ENCODE measurements at regions of chr2 and their contacts with region 1.

Region 1: DNA sequence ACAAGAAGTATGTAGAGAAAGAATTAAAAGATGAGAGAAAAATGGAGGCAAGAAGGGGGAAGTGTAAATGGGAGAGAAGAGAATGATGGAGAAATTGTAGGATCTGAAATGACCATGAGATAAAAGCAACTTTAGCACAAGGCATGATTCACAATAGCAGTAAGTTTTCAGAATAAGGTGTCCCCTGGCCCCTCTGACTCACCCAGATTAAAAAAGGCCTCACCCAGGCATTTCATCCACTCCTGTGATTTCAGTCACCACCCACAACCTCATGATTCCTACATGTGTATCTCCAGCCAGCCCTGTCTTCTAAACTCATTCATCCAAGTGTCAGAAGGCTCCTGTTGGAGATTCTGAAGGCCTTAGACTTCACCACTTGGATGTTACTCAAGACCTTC is 56.6 kb downstream of the SP100 start:
- DNase-seq: no peak
- ATAC-seq: peak; percentile 75
- H3K4me3 Mint-ChIP-seq: peak overlapping the region; percentile 17
- H3K27ac Mint-ChIP-seq: peak overlapping the region; percentile 89
- H3K4me1 Mint-ChIP-seq: peaks cover 56% of the 10 kb centered on the region
- H3K27me3 Mint-ChIP-seq: no peaks in the 10 kb centered on the region
- CTCF ChIP-seq: no peak

Region 2: GRCh38 chr2:229519655-229520430 is 952.8 kb before region 1 on chr2:
- CTCF ChIA-PET with region 1: no interaction called
- POLR2A ChIA-PET with region 1: no interaction called
- intact Hi-C with region 1: no loop called
- DNase-seq: no peak
- ATAC-seq: no peak
- H3K4me3 Mint-ChIP-seq: no peak overlapping the region
- H3K27ac Mint-ChIP-seq: no peak overlapping the region
- H3K4me1 Mint-ChIP-seq: no peaks in the 10 kb centered on the region
- H3K27me3 Mint-ChIP-seq: no peaks in the 10 kb centered on the region
- CTCF ChIP-seq: no peak

Region 3: GRCh38 chr2:230268606-230269243 is 203.9 kb before region 1 on chr2:
- CTCF ChIA-PET with region 1: no interaction called
- POLR2A ChIA-PET with region 1: no interaction called
- intact Hi-C with region 1: loop called (anchors 5 kb)
- DNase-seq: no peak
- ATAC-seq: no peak
- H3K4me3 Mint-ChIP-seq: peak overlapping the region; percentile 60
- H3K27ac Mint-ChIP-seq: peak overlapping the region; percentile 92
- H3K4me1 Mint-ChIP-seq: peaks cover 81% of the 10 kb centered on the region
- H3K27me3 Mint-ChIP-seq: no peaks in the 10 kb centered on the region
- CTCF ChIP-seq: no peak

Region 4: DNA sequence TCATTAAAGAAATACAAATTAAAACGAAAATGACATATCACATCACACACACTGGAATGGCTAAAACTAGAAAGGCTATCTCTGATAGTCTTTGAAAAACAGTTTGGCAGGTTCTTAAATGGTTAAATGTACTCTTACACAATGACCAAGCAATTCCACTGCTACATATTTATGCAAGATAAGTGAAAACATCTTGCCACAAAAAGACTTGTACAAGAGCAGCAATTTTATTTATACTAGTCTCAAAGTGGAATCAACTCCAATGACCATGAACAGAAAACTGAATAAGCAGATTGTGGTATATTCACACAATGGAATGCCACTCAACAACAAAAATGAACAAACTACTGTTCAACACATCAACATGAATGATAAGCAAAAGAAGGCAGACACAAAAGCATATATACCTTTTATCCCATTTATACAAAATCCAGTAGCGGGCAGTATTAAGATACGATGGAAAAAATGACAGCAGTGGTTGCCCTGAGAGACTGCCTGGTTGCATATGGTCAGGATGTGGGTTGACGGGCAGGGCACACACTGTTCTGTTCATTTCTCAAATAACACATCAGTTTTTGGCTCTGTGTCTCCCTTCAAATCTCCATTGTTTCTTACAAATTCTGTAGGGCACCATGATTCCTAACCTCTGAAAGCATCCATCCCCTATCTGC is 31.3 kb before region 1 on chr2:
- CTCF ChIA-PET with region 1: no interaction called
- POLR2A ChIA-PET with region 1: interaction called, 30 read pairs
- intact Hi-C with region 1: loop called (anchors 5 kb)
- DNase-seq: no peak
- ATAC-seq: peak; percentile 81
- H3K4me3 Mint-ChIP-seq: peak overlapping the region; percentile 62
- H3K27ac Mint-ChIP-seq: peak overlapping the region; percentile 93
- H3K4me1 Mint-ChIP-seq: peaks cover 80% of the 10 kb centered on the region
- H3K27me3 Mint-ChIP-seq: no peaks in the 10 kb centered on the region
- CTCF ChIP-seq: no peak

Region 5: GRCh38 chr2:230457073-230457768 is 15.4 kb before region 1 on chr2:
- CTCF ChIA-PET with region 1: no interaction called
- POLR2A ChIA-PET with region 1: interaction called, 13 read pairs
- intact Hi-C with region 1: no loop called
- DNase-seq: no peak
- ATAC-seq: peak; percentile 71
- H3K4me3 Mint-ChIP-seq: peak overlapping the region; percentile 19
- H3K27ac Mint-ChIP-seq: peak overlapping the region; percentile 69
- H3K4me1 Mint-ChIP-seq: peaks cover 78% of the 10 kb centered on the region
- H3K27me3 Mint-ChIP-seq: no peaks in the 10 kb centered on the region
- CTCF ChIP-seq: no peak

Region 6: DNA sequence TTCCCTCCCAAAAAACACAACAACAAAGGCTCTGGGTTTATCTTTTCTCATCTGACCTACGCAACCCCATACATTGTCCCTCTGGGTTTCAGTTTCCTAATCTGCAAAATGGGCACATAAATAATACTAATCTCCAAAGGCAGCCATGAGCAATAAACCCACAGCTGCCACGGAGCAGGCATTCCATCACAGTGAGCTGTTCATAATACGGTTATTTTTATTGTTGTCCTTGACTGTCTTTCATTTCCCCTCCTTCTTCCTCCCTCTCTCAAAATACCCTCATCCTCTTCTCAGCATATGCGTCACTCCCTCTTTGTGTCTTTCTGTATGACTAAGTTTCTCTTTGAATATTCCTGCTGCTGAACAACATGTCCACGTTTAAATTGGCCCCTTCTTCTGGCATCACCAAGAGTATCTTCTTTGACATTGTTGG is 110.2 kb after region 1 on chr2:
- CTCF ChIA-PET with region 1: no interaction called
- POLR2A ChIA-PET with region 1: interaction called, 13 read pairs
- intact Hi-C with region 1: no loop called
- DNase-seq: no peak
- ATAC-seq: peak; percentile 81
- H3K4me3 Mint-ChIP-seq: peak overlapping the region; percentile 42
- H3K27ac Mint-ChIP-seq: peak overlapping the region; percentile 92
- H3K4me1 Mint-ChIP-seq: peaks cover 53% of the 10 kb centered on the region
- H3K27me3 Mint-ChIP-seq: no peaks in the 10 kb centered on the region
- CTCF ChIP-seq: no peak

Measured in activated B cell treated with CpG ODN at 0.5 μM for 24 hours (primary cell).